ENCODE measurements at regions of chr6 and their contacts with region 1.

Region 1: GRCh38 chr6:56637640-56638039 is 5.0 kb downstream of the DST start:
- DNase-seq: no peak
- H3K4me3 Mint-ChIP-seq: no peak overlapping the region
- H3K27ac Mint-ChIP-seq: no peak overlapping the region
- H3K4me1 Mint-ChIP-seq: no peaks in the 10 kb centered on the region
- H3K27me3 Mint-ChIP-seq: peaks cover 10% of the 10 kb centered on the region

Region 2: DNA sequence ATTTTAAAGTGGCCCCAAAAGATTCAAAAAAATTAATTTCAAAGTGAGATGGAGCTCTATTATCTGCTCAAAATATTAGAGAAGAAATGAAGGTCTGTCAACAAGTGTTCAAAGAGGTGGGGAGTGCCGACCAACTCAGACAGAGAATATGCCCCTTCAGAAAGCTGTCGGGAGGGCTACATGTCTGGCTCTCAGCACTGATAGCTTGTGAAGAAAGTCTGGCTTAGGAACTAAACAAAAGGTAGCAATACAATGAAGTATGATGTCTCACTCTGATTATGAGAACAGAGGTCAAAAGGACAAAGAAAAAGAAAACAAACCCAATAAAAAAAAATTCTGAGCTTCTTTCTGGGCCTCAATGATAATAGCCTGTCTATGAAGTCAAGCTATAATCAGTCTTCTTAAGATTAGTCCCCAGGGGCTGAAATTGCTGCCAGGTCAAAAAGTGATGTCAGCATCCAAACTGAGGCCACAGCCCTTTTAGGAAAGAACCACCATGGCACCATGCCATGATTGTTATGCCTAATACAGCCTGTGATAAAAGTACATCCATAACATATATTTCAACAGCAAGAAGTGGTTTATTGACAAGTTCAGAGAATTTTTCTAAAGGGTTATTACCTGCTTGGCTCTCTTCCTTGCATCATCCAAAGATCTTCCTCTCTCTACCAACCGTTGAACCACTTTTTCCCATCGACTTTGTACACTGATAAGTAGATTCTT is 145.9 kb before region 1 on chr6:
- CTCF ChIA-PET with region 1: no interaction called
- intact Hi-C with region 1: no loop called
- DNase-seq: no peak
- H3K4me3 Mint-ChIP-seq: no peak overlapping the region
- H3K27ac Mint-ChIP-seq: no peak overlapping the region
- H3K4me1 Mint-ChIP-seq: no peaks in the 10 kb centered on the region
- H3K27me3 Mint-ChIP-seq: no peaks in the 10 kb centered on the region

Region 3: DNA sequence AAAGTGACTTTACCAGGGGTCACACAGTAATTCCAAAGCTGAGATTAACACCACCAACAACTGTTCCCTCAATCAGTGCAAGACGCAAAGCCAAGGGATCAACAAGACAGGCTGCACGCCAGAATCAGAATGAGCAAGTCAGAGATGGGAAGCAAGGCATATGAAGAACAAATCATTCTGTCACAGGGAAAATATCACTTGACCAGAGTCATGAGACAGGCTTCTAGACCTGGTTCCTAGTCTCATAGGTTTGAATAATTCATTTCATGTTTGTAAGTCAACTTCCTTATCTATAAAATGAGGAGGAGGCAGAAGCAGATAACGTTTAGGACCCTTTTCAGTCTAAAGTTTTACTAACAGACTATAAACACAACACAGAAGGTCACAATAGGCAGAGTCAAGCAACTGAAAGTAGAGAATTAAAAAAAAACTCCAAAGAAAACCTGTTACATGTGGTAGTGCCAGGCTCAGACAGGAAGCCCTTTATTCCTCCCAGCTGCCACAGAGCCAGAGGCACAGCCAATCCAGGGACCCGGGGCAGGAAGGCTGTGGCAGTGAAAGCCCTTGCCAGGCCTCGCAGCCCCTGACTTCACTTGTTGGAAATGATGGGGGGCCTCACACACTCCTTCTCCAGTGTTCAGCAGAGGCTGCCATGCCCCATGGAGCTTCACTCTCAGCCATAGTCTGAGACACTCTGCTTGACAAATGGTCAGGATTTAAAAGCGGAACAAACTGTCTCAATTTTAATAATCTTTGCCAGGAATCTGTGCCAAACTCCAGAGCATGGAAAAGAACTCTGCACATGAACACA is 34.2 kb after region 1 on chr6:
- CTCF ChIA-PET with region 1: no interaction called
- intact Hi-C with region 1: loop called (anchors 2 kb)
- DNase-seq: no peak
- H3K4me3 Mint-ChIP-seq: no peak overlapping the region
- H3K27ac Mint-ChIP-seq: no peak overlapping the region
- H3K4me1 Mint-ChIP-seq: peaks cover 2% of the 10 kb centered on the region
- H3K27me3 Mint-ChIP-seq: peaks cover 12% of the 10 kb centered on the region

Region 4: GRCh38 chr6:56699066-56699654 is 61.5 kb after region 1 on chr6:
- CTCF ChIA-PET with region 1: interaction called, 5 read pairs
- intact Hi-C with region 1: loop called (anchors 1 kb)
- DNase-seq: no peak
- H3K4me3 Mint-ChIP-seq: no peak overlapping the region
- H3K27ac Mint-ChIP-seq: no peak overlapping the region
- H3K4me1 Mint-ChIP-seq: no peaks in the 10 kb centered on the region
- H3K27me3 Mint-ChIP-seq: peaks cover 2% of the 10 kb centered on the region

Region 5: DNA sequence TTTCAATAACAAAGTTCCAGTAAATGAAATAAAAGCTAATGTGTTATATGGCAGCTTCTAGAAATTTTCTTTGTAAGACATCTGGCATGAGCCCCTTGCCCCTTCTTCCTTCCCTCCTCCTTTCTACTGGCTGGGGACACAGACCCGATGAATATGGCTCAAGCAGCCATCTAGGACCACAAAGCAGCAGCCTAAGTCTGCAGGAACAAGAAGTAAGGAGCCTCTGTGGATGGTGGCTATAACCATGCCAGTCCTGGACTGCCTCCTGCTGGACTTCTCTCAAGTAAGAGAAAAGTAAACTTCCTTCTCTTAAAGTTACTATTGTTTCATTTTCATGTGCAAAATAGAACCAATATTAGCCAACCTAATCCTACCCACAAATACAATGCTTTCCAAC is 119.9 kb after region 1 on chr6:
- CTCF ChIA-PET with region 1: no interaction called
- intact Hi-C with region 1: loop called (anchors 5 kb)
- DNase-seq: no peak
- H3K4me3 Mint-ChIP-seq: no peak overlapping the region
- H3K27ac Mint-ChIP-seq: no peak overlapping the region
- H3K4me1 Mint-ChIP-seq: peaks cover 5% of the 10 kb centered on the region
- H3K27me3 Mint-ChIP-seq: peaks cover 2% of the 10 kb centered on the region

Region 6: GRCh38 chr6:56851541-56852259 is 214.1 kb after region 1 on chr6:
- CTCF ChIA-PET with region 1: interaction called, 3 read pairs
- intact Hi-C with region 1: loop called (anchors 1 kb)
- DNase-seq: peak; percentile 43
- H3K4me3 Mint-ChIP-seq: peak overlapping the region; percentile 67
- H3K27ac Mint-ChIP-seq: no peak overlapping the region
- H3K4me1 Mint-ChIP-seq: peaks cover 21% of the 10 kb centered on the region
- H3K27me3 Mint-ChIP-seq: peaks cover 38% of the 10 kb centered on the region

Measured in activated naive CD4-positive, alpha-beta T cell treated with anti-CD3 and anti-CD28 coated beads for 36 hours (primary cell).